Activated CD4-positive, alpha-beta T cell treated with anti-CD3 and anti-CD28 coated beads, Interleukin-2, amount 10 ng/mL, durations not matched to agents 24 days and 14 days (primary cell): ENCODE measurements at regions of chr7 and their contacts with region 1.

Region 1: GRCh38 chr7:45099891-45100760 is 11.4 kb upstream of the NACAD start:
- DNase-seq: no peak
- H3K4me3 Mint-ChIP-seq: no peak overlapping the region
- H3K27ac Mint-ChIP-seq: no peak overlapping the region
- H3K4me1 Mint-ChIP-seq: no peaks in the 10 kb centered on the region
- H3K27me3 Mint-ChIP-seq: no peaks in the 10 kb centered on the region

Region 2: DNA sequence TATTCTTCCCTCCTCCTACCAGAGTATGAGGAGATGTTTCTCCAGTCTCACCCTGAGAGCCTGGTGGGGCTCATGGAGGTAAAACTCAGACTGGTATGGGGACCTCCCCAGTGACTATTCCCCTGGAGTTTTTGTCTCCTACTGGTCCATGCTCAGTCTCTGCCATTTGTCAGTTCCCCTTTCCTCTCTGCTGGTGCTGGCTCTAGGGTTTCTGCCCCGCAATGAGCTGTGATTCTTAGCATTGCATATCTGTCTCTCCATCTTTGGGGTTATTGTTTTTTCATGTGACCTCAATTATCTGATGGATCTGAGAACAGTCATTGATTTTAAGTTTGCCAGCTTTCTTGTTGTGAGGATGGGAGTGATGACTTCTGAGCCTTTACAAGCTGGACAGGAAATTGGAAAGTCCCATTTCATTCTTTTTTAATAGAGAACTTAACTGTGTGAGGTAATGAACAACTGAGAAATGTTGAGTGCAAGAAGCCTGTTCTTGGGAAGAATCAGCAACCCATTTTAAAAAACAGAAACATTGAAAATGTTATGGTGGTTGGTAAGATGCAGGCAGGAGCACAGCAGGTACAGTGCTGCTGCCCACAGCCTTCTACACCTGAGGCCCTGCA is 38.2 kb before region 1 on chr7:
- intact Hi-C with region 1: loop called (anchors 5 kb)
- DNase-seq: no peak
- H3K4me3 Mint-ChIP-seq: no peak overlapping the region
- H3K27ac Mint-ChIP-seq: peak overlapping the region; percentile 66
- H3K4me1 Mint-ChIP-seq: peaks cover 42% of the 10 kb centered on the region
- H3K27me3 Mint-ChIP-seq: no peaks in the 10 kb centered on the region